ENCODE measurements at regions of chr18 and their contacts with region 1.

Region 1: GRCh38 chr18:47204908-47205522 is 28.9 kb upstream of the IER3IP1 start:
- DNase-seq: peak in 1 of 2 donors; percentile 67
- ATAC-seq: peak in 2 of 3 donors; percentile 44 to 60
- H3K4me3 ChIP-seq: no peak overlapping the region
- H3K4me3 Mint-ChIP-seq: no peak overlapping the region
- H3K27ac ChIP-seq: no peak overlapping the region
- H3K27ac Mint-ChIP-seq: no peak overlapping the region
- H3K4me1 ChIP-seq: no peaks in the 10 kb centered on the region
- H3K4me1 Mint-ChIP-seq: no peaks in the 10 kb centered on the region
- H3K27me3 ChIP-seq: peaks cover 13% of the 10 kb centered on the region
- H3K27me3 Mint-ChIP-seq: peaks cover 20 to 72% of the 10 kb centered on the region in 2 donors
- CTCF ChIP-seq: peak; percentile 71

Region 2: GRCh38 chr18:47050468-47050867 is 154.5 kb before region 1 on chr18:
- intact Hi-C with region 1: loop called (anchors 1 kb)
- DNase-seq: peak in 1 of 2 donors; percentile 56
- ATAC-seq: no peak
- H3K4me3 ChIP-seq: no peak overlapping the region
- H3K4me3 Mint-ChIP-seq: no peak overlapping the region
- H3K27ac ChIP-seq: no peak overlapping the region
- H3K27ac Mint-ChIP-seq: no peak overlapping the region
- H3K4me1 ChIP-seq: no peaks in the 10 kb centered on the region
- H3K4me1 Mint-ChIP-seq: no peaks in the 10 kb centered on the region
- H3K27me3 ChIP-seq: no peaks in the 10 kb centered on the region
- H3K27me3 Mint-ChIP-seq: peaks cover 0 to 8% of the 10 kb centered on the region in 2 donors
- CTCF ChIP-seq: peak; percentile 61

Region 3: DNA sequence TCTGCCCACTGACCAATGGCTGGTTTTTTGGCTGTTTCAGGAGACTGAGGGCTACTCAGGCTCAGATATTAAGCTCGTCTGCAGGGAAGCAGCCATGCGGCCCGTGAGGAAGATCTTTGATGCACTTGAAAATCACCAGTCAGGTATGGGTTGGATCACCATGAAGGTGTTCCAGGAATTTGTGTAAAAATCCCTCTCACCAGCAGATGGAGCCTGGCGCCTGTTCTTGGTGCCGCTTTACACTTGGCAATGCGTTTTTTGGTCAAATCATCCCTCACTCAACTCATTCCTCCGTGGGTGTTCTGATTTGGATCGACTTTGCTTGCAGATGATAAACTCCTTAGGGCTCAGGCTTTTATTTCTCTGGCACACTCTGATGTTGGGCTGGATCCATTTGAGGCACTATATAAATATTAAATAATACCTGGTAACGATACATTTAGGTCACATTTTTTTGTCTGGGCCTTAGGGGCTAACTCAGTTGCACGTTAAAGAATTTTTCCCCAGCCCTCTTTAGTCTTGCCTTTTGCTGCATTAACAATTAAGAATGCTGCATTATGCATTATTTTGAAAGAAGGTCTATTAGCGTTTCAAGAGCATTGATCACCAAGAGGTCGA is 104.7 kb before region 1 on chr18:
- intact Hi-C with region 1: loop called (anchors 1 kb)
- DNase-seq: peak; percentile 28 to 72
- ATAC-seq: peak in 2 of 3 donors; percentile 42 to 67
- H3K4me3 ChIP-seq: no peak overlapping the region
- H3K4me3 Mint-ChIP-seq: no peak overlapping the region
- H3K27ac ChIP-seq: no peak overlapping the region
- H3K27ac Mint-ChIP-seq: no peak overlapping the region
- H3K4me1 ChIP-seq: no peaks in the 10 kb centered on the region
- H3K4me1 Mint-ChIP-seq: no peaks in the 10 kb centered on the region
- H3K27me3 ChIP-seq: no peaks in the 10 kb centered on the region
- H3K27me3 Mint-ChIP-seq: no peaks in the 10 kb centered on the region
- CTCF ChIP-seq: peak; percentile 61

Region 4: DNA sequence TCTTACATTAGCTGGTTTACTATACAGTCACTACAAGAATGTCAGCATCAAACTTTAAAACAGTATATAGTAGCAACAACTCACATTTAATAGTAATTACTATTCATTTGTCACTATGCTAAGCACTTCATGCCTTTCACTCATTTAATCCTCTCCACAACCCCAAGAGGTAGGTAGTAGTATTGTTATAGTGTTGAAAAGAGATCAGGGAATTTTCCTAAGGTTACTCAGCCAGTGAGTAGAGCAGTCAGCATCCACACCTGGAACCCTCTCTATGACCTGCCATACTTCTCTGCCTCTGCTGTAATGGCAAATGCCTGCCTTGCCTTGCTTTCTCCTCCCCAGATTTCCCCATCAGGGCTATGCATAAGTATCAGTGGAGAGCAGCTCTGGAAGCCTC is 21.6 kb after region 1 on chr18:
- intact Hi-C with region 1: no loop called
- DNase-seq: no peak
- ATAC-seq: no peak
- H3K4me3 ChIP-seq: no peak overlapping the region
- H3K4me3 Mint-ChIP-seq: no peak overlapping the region
- H3K27ac ChIP-seq: no peak overlapping the region
- H3K27ac Mint-ChIP-seq: no peak overlapping the region
- H3K4me1 ChIP-seq: no peaks in the 10 kb centered on the region
- H3K4me1 Mint-ChIP-seq: no peaks in the 10 kb centered on the region
- H3K27me3 ChIP-seq: peaks cover 3% of the 10 kb centered on the region
- H3K27me3 Mint-ChIP-seq: peaks cover 19 to 29% of the 10 kb centered on the region in 2 donors
- CTCF ChIP-seq: no peak